Right lobe of liver (tissue), 6 donors: ENCODE measurements at regions of chr16 and their contacts with region 1.

Region 1: GRCh38 chr16:10668322-10669045 is 26.2 kb downstream of the TEKT5 start:
- DNase-seq: peak in 1 of 3 donors; percentile 24
- ATAC-seq: peak; percentile 49 to 76 (median 62)
- H3K4me3 ChIP-seq: no peak overlapping the region
- H3K27ac ChIP-seq: no peak overlapping the region
- H3K4me1 ChIP-seq: no peaks in the 10 kb centered on the region
- H3K27me3 ChIP-seq: no peaks in the 10 kb centered on the region
- CTCF ChIP-seq: peak; percentile 25 to 40 (median 38)
- POLR2A ChIP-seq: no peak

Region 2: DNA sequence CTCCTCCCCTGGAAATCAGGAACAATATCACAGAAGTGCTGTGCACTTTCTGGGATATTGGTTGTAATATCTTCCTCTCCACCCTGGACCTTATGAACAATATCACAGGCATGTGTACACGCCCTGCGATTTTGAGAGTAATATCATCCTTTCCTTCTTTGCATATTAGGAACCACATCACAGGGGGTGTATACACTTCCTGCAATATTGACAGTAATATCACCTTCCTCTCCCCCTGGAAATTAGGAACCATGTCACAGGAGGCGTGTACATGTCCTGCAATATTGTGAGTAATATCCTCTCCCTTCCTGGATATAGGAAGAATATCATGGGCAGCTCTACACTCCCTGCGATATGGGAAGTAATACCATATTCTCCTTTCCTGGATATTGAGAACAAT is 40.5 kb after region 1 on chr16:
- intact Hi-C with region 1: loop called in 1 of 2 experiments (anchors 10 kb)
- DNase-seq: no peak
- ATAC-seq: no peak
- H3K4me3 ChIP-seq: no peak overlapping the region
- H3K27ac ChIP-seq: no peak overlapping the region
- H3K4me1 ChIP-seq: no peaks in the 10 kb centered on the region
- H3K27me3 ChIP-seq: no peaks in the 10 kb centered on the region
- CTCF ChIP-seq: no peak
- POLR2A ChIP-seq: no peak